ENCODE measurements at regions of chr3 and their contacts with region 1.

Region 1: GRCh38 chr3:9731206-9732079 is at the start of gene BRPF1:
- DNase-seq: peak; percentile 98 to 100 (median 99)
- ATAC-seq: peak; percentile 94
- H3K4me3 ChIP-seq: peak within 1 kb of the TSS; percentile 91 to 92
- H3K4me3 Mint-ChIP-seq: peak within 1 kb of the TSS; percentile 91
- H3K27ac ChIP-seq: peak within 1 kb of the TSS; percentile 83 to 97
- H3K27ac Mint-ChIP-seq: peak within 1 kb of the TSS; percentile 93
- H3K4me1 ChIP-seq: peaks cover 48% of the 10 kb centered on the region
- H3K4me1 Mint-ChIP-seq: peaks cover 66% of the 10 kb centered on the region
- H3K27me3 ChIP-seq: no peaks in the 10 kb centered on the region
- H3K27me3 Mint-ChIP-seq: no peaks in the 10 kb centered on the region
- CTCF ChIP-seq: no peak
- total RNA-seq, gene BRPF1: 22.0 to 25.8 TPM

Region 2: DNA sequence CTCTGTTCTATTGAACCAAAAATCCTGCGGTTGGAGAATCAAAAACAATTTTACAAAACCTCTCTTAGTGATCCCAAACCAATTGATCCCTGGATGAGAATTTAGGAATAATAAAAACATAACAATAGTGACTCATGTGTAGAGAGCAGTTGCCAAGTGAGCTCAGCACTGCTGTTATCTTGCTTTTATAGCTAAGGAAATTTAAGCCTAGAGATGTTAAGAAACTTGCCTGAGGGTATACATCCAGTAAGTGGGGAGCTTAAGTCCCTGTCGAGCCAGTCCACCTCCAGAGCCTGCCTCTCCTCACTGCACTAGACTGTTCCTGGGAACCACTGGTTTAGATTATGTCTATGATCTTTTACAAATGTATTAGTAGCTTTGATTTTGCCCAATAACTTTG is 1588.3 kb before region 1 on chr3:
- CTCF ChIA-PET with region 1: no interaction called
- POLR2A ChIA-PET with region 1: no interaction called
- intact Hi-C with region 1: no loop called
- DNase-seq: no peak
- ATAC-seq: no peak
- H3K4me3 ChIP-seq: no peak overlapping the region
- H3K4me3 Mint-ChIP-seq: no peak overlapping the region
- H3K27ac ChIP-seq: no peak overlapping the region
- H3K27ac Mint-ChIP-seq: no peak overlapping the region
- H3K4me1 ChIP-seq: no peaks in the 10 kb centered on the region
- H3K4me1 Mint-ChIP-seq: no peaks in the 10 kb centered on the region
- H3K27me3 ChIP-seq: no peaks in the 10 kb centered on the region
- H3K27me3 Mint-ChIP-seq: peaks cover 5% of the 10 kb centered on the region
- CTCF ChIP-seq: no peak

Region 3: DNA sequence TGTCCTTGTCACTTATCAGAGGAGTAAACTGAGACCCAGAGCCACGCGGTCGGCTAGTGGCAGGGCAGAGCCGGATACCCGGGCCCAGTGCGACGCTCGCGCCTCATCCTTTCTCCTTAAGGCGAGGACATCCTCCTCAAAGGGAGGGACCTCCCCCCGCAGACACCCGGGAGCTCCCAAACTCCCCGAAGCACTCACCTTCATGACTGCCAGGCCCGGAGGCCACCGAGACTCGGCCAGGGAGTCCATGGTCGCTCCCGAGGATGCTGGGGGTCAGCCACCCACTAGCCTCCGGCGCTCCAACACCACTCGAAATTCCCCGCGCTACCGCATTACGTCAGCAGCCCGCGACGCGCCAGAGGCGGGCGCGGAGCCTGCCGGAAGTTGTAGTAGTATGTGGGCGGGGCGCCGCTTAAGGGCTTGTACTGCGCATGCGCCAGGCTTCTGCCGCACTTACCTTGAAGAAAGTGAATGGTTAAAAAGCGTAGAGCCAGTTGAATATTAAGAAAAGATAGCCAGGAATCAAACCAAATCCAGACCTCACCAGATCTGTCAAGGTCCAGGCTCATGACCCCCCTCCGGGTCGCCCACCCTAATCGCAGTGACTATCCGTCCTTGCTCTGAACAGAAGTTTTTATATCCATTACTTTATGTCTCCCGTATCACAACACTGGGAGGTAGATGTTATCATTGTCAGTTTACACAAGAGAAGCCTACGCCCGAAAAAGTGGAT is 768.1 kb before region 1 on chr3 and contains the start of gene RAD18:
- CTCF ChIA-PET with region 1: no interaction called
- POLR2A ChIA-PET with region 1: no interaction called
- intact Hi-C with region 1: loop called in 1 of 2 experiments (anchors 5 kb)
- DNase-seq: peak; percentile 83 to 95 (median 93)
- ATAC-seq: peak; percentile 94
- H3K4me3 ChIP-seq: peak within 1 kb of the TSS; percentile 85 to 89
- H3K4me3 Mint-ChIP-seq: peak within 1 kb of the TSS; percentile 98
- H3K27ac ChIP-seq: peak within 1 kb of the TSS; percentile 87 to 92
- H3K27ac Mint-ChIP-seq: peak within 1 kb of the TSS; percentile 94
- H3K4me1 ChIP-seq: peaks cover 8% of the 10 kb centered on the region
- H3K4me1 Mint-ChIP-seq: peaks cover 35% of the 10 kb centered on the region
- H3K27me3 ChIP-seq: no peaks in the 10 kb centered on the region
- H3K27me3 Mint-ChIP-seq: peaks cover under 1% of the 10 kb centered on the region
- CTCF ChIP-seq: no peak
- total RNA-seq, gene RAD18: 11.7 to 12.1 TPM

Region 4: GRCh38 chr3:9362731-9363530 is 368.5 kb before region 1 on chr3 and contains the start of gene THUMPD3:
- CTCF ChIA-PET with region 1: no interaction called
- POLR2A ChIA-PET with region 1: no interaction called
- intact Hi-C with region 1: loop called (anchors 2 to 10 kb)
- DNase-seq: peak; percentile 82 to 94 (median 92)
- ATAC-seq: peak; percentile 92
- H3K4me3 ChIP-seq: peak within 1 kb of the TSS; percentile 79 to 97
- H3K4me3 Mint-ChIP-seq: peak within 1 kb of the TSS; percentile 96
- H3K27ac ChIP-seq: peak within 1 kb of the TSS; percentile 93 to 97
- H3K27ac Mint-ChIP-seq: peak within 1 kb of the TSS; percentile 99
- H3K4me1 ChIP-seq: peaks cover 19% of the 10 kb centered on the region
- H3K4me1 Mint-ChIP-seq: peaks cover 35% of the 10 kb centered on the region
- H3K27me3 ChIP-seq: no peaks in the 10 kb centered on the region
- H3K27me3 Mint-ChIP-seq: no peaks in the 10 kb centered on the region
- CTCF ChIP-seq: no peak
- total RNA-seq, gene THUMPD3: 84.1 to 84.3 TPM

Region 5: DNA sequence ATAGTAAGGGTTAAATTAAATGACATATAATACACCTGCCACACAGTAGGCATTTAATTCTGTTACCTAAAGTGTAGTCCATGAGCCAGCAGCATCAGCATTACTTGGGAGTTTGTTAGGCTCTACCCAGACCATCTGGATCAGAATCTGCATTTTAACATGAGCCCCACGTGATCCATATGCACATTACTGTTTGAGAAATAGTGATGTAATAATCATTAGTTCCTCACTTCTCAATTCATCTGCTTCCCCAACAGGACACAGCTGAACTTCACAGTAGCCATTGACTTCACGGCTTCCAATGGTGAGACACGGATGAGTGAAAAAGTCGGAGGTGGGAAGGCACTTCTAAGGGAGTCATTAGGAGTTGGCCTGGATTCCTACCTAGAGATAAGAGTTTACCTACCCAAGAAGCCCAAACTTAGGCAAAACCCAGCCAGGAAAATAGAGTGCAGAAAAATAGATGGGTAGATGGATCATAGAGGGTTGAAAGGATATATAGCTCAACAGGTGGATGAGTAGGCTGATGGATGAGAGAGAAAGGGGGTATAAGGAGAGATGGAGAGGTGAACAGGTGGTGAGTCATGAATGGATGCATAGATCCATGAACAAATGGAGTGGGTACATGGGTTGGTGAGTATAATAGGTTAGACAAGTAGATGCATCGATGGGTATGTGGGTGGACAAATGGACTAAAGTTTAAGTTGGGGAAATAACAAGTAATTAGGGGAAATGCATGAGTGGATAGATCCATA is 14.5 kb before region 1 on chr3:
- CTCF ChIA-PET with region 1: interaction called, 8 read pairs
- POLR2A ChIA-PET with region 1: no interaction called
- intact Hi-C with region 1: loop called in 1 of 2 experiments (anchors 1 kb)
- DNase-seq: no peak
- ATAC-seq: no peak
- H3K4me3 ChIP-seq: no peak overlapping the region
- H3K4me3 Mint-ChIP-seq: no peak overlapping the region
- H3K27ac ChIP-seq: no peak overlapping the region
- H3K27ac Mint-ChIP-seq: no peak overlapping the region
- H3K4me1 ChIP-seq: peaks cover 7% of the 10 kb centered on the region
- H3K4me1 Mint-ChIP-seq: peaks cover 11% of the 10 kb centered on the region
- H3K27me3 ChIP-seq: no peaks in the 10 kb centered on the region
- H3K27me3 Mint-ChIP-seq: no peaks in the 10 kb centered on the region
- CTCF ChIP-seq: no peak

Region 6: GRCh38 chr3:9760779-9761505 is 29.5 kb after region 1 on chr3:
- CTCF ChIA-PET with region 1: no interaction called
- POLR2A ChIA-PET with region 1: no interaction called
- intact Hi-C with region 1: no loop called
- DNase-seq: no peak
- ATAC-seq: no peak
- H3K4me3 ChIP-seq: no peak overlapping the region
- H3K4me3 Mint-ChIP-seq: no peak overlapping the region
- H3K27ac ChIP-seq: no peak overlapping the region
- H3K27ac Mint-ChIP-seq: no peak overlapping the region
- H3K4me1 ChIP-seq: no peaks in the 10 kb centered on the region
- H3K4me1 Mint-ChIP-seq: peaks cover 2% of the 10 kb centered on the region
- H3K27me3 ChIP-seq: no peaks in the 10 kb centered on the region
- H3K27me3 Mint-ChIP-seq: no peaks in the 10 kb centered on the region
- CTCF ChIP-seq: no peak

Region 7: DNA sequence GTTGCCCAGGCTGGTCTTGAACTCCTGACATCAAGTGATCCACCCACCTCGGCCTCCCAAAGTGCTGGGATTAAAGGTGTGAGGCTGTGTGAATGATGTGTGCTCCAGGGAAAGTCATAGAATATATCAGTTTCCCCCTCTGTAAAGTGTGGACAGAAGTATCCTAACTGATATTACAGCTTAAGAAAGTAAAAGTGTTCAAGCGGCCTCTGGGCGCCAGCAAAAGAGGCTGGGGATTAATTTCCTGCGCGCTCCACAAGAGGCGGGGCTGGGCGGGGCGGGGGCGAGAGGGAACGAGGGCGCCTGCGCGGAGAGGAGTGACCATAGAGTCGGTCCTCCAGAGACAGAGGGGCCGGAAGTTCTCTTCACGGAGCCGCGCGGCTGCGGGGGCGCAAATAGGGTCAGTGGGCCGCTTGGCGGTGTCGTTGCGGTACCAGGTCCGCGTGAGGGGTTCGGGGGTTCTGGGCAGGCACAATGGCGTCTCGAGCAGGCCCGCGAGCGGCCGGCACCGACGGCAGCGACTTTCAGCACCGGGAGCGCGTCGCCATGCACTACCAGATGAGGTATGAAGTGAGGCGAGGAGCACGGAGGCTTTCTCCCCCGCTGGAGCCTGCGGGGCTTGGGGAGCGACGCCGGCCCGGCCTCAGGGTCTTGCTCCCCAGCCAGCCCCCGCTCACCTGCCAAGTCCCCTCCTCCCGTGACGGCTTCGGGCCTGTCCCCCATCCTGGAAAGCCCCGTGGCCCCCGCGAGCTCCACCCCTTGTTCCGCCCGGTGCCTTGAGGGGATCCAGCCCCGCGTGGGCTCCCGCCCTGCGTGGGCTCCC is 159.0 kb after region 1 on chr3 and contains the start of gene JAGN1:
- CTCF ChIA-PET with region 1: no interaction called
- POLR2A ChIA-PET with region 1: no interaction called
- intact Hi-C with region 1: loop called (anchors 1 to 5 kb)
- DNase-seq: peak; percentile 86 to 94 (median 91)
- ATAC-seq: peak; percentile 92
- H3K4me3 ChIP-seq: peak within 1 kb of the TSS; percentile 95 to 96
- H3K4me3 Mint-ChIP-seq: peak within 1 kb of the TSS; percentile 98
- H3K27ac ChIP-seq: peak within 1 kb of the TSS; percentile 99 to 100
- H3K27ac Mint-ChIP-seq: peak within 1 kb of the TSS; percentile 100
- H3K4me1 ChIP-seq: peaks cover 16% of the 10 kb centered on the region
- H3K4me1 Mint-ChIP-seq: peaks cover 40% of the 10 kb centered on the region
- H3K27me3 ChIP-seq: no peaks in the 10 kb centered on the region
- H3K27me3 Mint-ChIP-seq: no peaks in the 10 kb centered on the region
- CTCF ChIP-seq: no peak
- total RNA-seq, gene JAGN1: 13.4 to 14.5 TPM

Region 8: DNA sequence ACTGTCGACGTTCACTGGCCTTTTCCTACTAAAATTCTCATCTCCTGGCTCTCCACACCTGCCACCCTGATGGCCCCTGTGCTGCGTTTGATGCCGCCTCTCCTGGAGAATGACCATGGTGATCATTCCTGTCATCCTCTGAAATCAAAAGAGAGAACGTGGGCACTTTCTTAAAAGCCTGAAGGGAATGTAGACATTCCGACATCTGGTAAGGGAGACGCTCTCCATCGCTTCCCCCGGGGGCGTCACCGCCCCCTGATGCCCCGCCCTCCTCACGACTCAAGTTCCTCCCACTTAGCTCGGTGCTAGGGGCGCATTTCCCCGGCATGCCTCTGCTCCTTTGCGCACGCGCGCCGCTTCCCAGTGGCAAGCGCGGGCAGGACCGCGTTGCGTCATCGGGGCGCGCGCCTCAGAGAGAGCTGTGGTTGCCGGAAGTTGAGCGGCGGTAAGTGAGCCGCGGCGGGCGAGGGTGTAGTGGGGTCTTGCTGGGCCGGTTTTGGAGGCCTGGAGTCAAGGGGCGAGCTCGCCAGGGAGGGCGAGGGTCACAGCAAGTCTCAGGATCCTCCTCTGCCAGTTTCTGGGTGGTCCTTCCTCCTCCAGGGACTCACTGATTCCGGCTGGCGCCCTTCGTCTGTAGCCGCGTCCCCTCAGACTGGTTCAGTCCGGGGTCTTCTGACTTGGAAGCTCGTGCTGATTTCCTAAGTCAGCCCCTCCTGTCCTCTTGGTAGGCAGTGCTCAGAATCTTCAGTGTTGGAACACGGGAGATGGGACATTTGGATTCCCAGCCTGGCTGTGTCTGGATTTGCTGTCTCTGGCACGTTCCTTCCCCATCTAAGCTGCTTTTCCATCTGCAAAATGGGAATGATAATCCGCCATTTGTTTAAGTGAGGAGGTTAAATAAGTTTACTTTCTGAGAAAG is 1540.8 kb after region 1 on chr3 and contains the start of gene ATG7:
- CTCF ChIA-PET with region 1: no interaction called
- POLR2A ChIA-PET with region 1: no interaction called
- intact Hi-C with region 1: loop called in 1 of 2 experiments (anchors 10 kb)
- DNase-seq: peak; percentile 94 to 98 (median 97)
- ATAC-seq: peak; percentile 98
- H3K4me3 ChIP-seq: peak within 1 kb of the TSS; percentile 77 to 96
- H3K4me3 Mint-ChIP-seq: peak within 1 kb of the TSS; percentile 96
- H3K27ac ChIP-seq: peak within 1 kb of the TSS; percentile 94 to 97
- H3K27ac Mint-ChIP-seq: peak within 1 kb of the TSS; percentile 99
- H3K4me1 ChIP-seq: peaks cover 23% of the 10 kb centered on the region
- H3K4me1 Mint-ChIP-seq: peaks cover 52% of the 10 kb centered on the region
- H3K27me3 ChIP-seq: no peaks in the 10 kb centered on the region
- H3K27me3 Mint-ChIP-seq: no peaks in the 10 kb centered on the region
- CTCF ChIP-seq: no peak
- total RNA-seq, gene ATG7: 21.3 to 23.8 TPM

Measured in CD8-positive, alpha-beta T cell (primary cell).